Body of pancreas (tissue), 4 donors: ENCODE measurements at regions of chr13 and their contacts with region 1.

Region 1: GRCh38 chr13:112324120-112324519 is 52.0 kb upstream of the SPACA7 start:
- DNase-seq: no peak
- ATAC-seq: no peak
- H3K4me3 ChIP-seq: no peak overlapping the region
- H3K27ac ChIP-seq: no peak overlapping the region
- H3K4me1 ChIP-seq: no peaks in the 10 kb centered on the region
- H3K27me3 ChIP-seq: no peaks in the 10 kb centered on the region
- CTCF ChIP-seq: no peak
- POLR2A ChIP-seq: no peak

Region 2: DNA sequence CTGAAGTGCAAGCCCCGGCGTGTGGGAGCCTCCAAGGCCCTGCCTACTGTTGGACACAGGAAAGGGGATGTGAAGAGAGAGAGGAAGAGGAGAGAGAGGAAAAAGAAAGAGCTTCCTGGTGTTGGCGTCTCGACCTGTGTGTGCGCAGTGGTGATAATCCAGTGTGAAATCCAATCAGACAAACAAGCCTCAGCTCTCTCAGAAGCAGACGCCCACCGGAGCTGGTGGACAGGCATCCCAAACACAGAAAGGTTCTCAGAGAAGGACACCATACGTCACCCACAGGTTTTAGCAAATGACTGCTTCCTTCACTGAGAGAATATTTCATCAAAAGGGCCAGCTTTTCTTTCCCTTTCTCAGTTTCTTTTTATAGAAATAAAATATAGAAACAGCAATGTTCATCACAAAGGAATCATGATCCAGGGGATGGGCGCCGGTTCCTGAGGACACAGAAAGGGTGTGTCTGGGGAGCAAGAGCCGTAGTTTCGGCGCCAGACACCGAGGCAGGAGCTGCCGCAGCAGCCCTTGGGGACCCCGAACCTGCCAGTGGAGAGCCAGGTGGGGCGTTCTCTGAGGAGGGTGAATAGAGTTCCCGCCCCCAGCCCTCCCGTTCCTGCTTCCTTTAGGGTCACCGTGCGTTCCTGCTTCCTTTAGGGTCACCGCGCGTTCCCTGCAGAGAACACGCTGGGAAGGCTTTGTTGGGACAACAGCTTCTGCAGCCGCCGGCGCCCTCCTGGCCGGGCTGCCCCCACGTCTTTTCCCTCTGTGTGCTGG is 403.0 kb before region 1 on chr13:
- intact Hi-C with region 1: no loop called
- DNase-seq: peak in 1 of 4 donors; percentile 1
- ATAC-seq: no peak
- H3K4me3 ChIP-seq: no peak overlapping the region
- H3K27ac ChIP-seq: no peak overlapping the region
- H3K4me1 ChIP-seq: no peaks in the 10 kb centered on the region
- H3K27me3 ChIP-seq: no peaks in the 10 kb centered on the region
- CTCF ChIP-seq: no peak
- POLR2A ChIP-seq: no peak

Region 3: DNA sequence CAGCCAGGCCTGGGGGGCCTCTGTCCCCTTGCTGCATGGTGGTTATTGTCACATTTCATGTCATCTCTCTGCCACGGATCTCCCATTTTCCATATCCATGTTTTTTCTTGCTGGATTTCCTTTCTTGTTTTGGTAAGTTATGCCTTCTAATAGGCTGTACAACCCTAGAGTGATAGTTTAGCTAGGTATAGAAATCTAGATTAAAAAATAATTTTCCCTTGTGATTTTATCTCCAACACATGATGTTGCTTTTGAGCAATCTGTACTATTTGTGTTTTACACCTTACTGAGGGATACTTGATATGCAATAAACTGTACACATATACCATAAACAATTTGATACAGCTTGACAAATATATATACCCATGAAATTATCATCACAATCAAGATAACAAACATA is 240.1 kb before region 1 on chr13:
- intact Hi-C with region 1: no loop called
- DNase-seq: no peak
- ATAC-seq: no peak
- H3K4me3 ChIP-seq: no peak overlapping the region
- H3K27ac ChIP-seq: no peak overlapping the region
- H3K4me1 ChIP-seq: no peaks in the 10 kb centered on the region
- H3K27me3 ChIP-seq: no peaks in the 10 kb centered on the region
- CTCF ChIP-seq: no peak
- POLR2A ChIP-seq: no peak

Region 4: DNA sequence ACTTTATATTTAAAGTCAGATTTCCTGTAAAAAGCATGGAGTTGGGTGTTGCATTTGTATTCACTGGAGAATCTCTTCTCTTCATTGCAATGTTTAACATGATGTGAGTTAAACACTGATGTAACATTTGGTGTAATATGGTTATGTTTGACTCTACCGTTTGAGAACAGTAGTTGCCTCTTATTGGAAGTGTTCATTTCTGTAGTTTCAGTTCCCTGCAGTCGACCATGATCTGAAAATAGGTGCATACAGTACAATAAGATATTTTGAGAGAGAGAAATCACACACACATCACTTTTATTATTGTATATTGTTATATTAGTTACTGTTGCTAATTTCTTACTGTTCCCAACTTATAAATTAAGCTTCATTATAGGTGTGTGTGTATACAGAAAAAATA is 53.2 kb before region 1 on chr13:
- intact Hi-C with region 1: loop called (anchors 5 kb)
- DNase-seq: no peak
- ATAC-seq: no peak
- H3K4me3 ChIP-seq: no peak overlapping the region
- H3K27ac ChIP-seq: no peak overlapping the region
- H3K4me1 ChIP-seq: no peaks in the 10 kb centered on the region
- H3K27me3 ChIP-seq: no peaks in the 10 kb centered on the region
- CTCF ChIP-seq: no peak
- POLR2A ChIP-seq: no peak

Region 5: GRCh38 chr13:112812306-112813055 is 488.4 kb after region 1 on chr13:
- intact Hi-C with region 1: no loop called
- DNase-seq: no peak
- ATAC-seq: no peak
- H3K4me3 ChIP-seq: no peak overlapping the region
- H3K27ac ChIP-seq: no peak overlapping the region
- H3K4me1 ChIP-seq: no peaks in the 10 kb centered on the region
- H3K27me3 ChIP-seq: no peaks in the 10 kb centered on the region
- CTCF ChIP-seq: no peak
- POLR2A ChIP-seq: no peak